AG04450 (cell line): ENCODE measurements at regions of chr4 and their contacts with region 1.

Region 1: GRCh38 chr4:147111033-147111367 is 165.3 kb upstream of the TTC29 start:
- DNase-seq: no peak
- H3K4me3 ChIP-seq: no peak overlapping the region
- H3K27ac ChIP-seq: no peak overlapping the region
- H3K27me3 ChIP-seq: no peaks in the 10 kb centered on the region
- CTCF ChIP-seq: no peak; the same call in 1 of the 2 replicates

Region 2: GRCh38 chr4:147003956-147004809 is 106.8 kb before region 1 on chr4:
- CTCF ChIA-PET with region 1: no interaction called
- POLR2A ChIA-PET with region 1: no interaction called
- DNase-seq: no peak
- H3K4me3 ChIP-seq: no peak overlapping the region
- H3K27ac ChIP-seq: no peak overlapping the region
- H3K27me3 ChIP-seq: no peaks in the 10 kb centered on the region
- CTCF ChIP-seq: no peak

Region 3: GRCh38 chr4:147480891-147481576 is 370.0 kb after region 1 on chr4 and contains the start of gene EDNRA:
- CTCF ChIA-PET with region 1: interaction called, 16 read pairs
- POLR2A ChIA-PET with region 1: no interaction called
- DNase-seq: no peak
- H3K4me3 ChIP-seq: peak within 1 kb of the TSS; percentile 74
- H3K27ac ChIP-seq: peak within 1 kb of the TSS; percentile 55
- H3K27me3 ChIP-seq: no peaks in the 10 kb centered on the region
- CTCF ChIP-seq: no peak
- polyA plus RNA-seq, gene EDNRA: 28.4 and 38.4 TPM in 2 replicates